ENCODE measurements at regions of chr1 and their contacts with region 1.

Region 1: DNA sequence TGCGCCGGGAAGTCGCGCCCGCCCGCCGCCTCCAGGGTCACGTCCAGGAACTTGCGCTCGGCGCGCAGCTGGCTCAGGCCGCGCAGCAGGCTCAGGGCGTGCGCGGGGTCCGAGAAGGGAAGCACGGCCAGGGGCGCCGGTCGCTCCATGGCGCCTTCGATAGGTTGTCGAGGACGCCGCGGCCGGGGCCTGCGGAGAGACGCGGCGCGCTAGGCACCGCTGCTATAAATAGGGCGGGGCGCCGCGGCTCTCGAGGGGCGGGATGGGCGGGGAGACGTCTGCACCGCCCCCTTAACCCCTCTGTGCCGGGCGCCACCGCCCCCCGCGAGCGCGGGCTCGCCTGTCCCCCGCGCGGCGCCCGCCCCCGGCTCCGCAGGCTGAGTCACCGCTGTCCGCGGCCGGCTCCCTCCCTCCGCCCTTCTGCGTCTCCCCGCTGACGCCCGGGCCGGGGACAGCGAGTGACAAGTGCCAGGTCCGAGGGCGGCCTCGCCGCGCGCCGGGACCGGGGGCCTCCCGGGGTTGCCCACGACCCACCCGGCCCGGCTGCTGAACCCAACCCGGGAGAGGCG is at the start of gene KLHL21:
- DNase-seq: peak; percentile 89 to 95 (median 93)
- H3K4me3 ChIP-seq: peak within 1 kb of the TSS; percentile 57 to 97 (median 89)
- H3K27ac ChIP-seq: peak within 1 kb of the TSS; percentile 83 to 96
- H3K4me1 ChIP-seq: peaks cover 10 to 56% (median 54%) of the 10 kb centered on the region in 4 experiments
- H3K27me3 ChIP-seq: no peaks in the 10 kb centered on the region

Region 2: GRCh38 chr1:6579374-6580118 is 23.2 kb before region 1 on chr1 and contains the start of gene ZBTB48:
- CTCF ChIA-PET with region 1: interaction called, 12 read pairs
- POLR2A ChIA-PET with region 1: interaction called, 11 read pairs
- DNase-seq: peak; percentile 95 to 96 (median 96)
- H3K4me3 ChIP-seq: peak within 1 kb of the TSS; percentile 64 to 85 (median 76)
- H3K27ac ChIP-seq: peak within 1 kb of the TSS; percentile 81 to 94
- H3K4me1 ChIP-seq: peaks cover 4 to 37% (median 33%) of the 10 kb centered on the region in 4 experiments
- H3K27me3 ChIP-seq: no peaks in the 10 kb centered on the region

Region 3: GRCh38 chr1:6587261-6588005 is 15.3 kb before region 1 on chr1:
- CTCF ChIA-PET with region 1: interaction called, 48 read pairs
- POLR2A ChIA-PET with region 1: interaction called, 7 read pairs
- DNase-seq: no peak
- H3K4me3 ChIP-seq: no peak overlapping the region
- H3K27ac ChIP-seq: no peak overlapping the region
- H3K4me1 ChIP-seq: peaks cover 6 to 71% (median 63%) of the 10 kb centered on the region in 4 experiments
- H3K27me3 ChIP-seq: no peaks in the 10 kb centered on the region

Region 4: GRCh38 chr1:6634371-6635052 is 31.8 kb after region 1 on chr1:
- CTCF ChIA-PET with region 1: interaction called, 11 read pairs
- POLR2A ChIA-PET with region 1: no interaction called
- DNase-seq: peak; percentile 47 to 63 (median 63)
- H3K4me3 ChIP-seq: no peak overlapping the region
- H3K27ac ChIP-seq: no peak overlapping the region
- H3K4me1 ChIP-seq: no peaks in the 10 kb centered on the region
- H3K27me3 ChIP-seq: no peaks in the 10 kb centered on the region

Measured in common myeloid progenitor, CD34-positive (primary cell).